ENCODE measurements at regions of chr19 and their contacts with region 1.

Region 1: GRCh38 chr19:46529622-46530462 is 34.2 kb upstream of the PNMA8B start:
- DNase-seq: peak; percentile 63

Region 2: DNA sequence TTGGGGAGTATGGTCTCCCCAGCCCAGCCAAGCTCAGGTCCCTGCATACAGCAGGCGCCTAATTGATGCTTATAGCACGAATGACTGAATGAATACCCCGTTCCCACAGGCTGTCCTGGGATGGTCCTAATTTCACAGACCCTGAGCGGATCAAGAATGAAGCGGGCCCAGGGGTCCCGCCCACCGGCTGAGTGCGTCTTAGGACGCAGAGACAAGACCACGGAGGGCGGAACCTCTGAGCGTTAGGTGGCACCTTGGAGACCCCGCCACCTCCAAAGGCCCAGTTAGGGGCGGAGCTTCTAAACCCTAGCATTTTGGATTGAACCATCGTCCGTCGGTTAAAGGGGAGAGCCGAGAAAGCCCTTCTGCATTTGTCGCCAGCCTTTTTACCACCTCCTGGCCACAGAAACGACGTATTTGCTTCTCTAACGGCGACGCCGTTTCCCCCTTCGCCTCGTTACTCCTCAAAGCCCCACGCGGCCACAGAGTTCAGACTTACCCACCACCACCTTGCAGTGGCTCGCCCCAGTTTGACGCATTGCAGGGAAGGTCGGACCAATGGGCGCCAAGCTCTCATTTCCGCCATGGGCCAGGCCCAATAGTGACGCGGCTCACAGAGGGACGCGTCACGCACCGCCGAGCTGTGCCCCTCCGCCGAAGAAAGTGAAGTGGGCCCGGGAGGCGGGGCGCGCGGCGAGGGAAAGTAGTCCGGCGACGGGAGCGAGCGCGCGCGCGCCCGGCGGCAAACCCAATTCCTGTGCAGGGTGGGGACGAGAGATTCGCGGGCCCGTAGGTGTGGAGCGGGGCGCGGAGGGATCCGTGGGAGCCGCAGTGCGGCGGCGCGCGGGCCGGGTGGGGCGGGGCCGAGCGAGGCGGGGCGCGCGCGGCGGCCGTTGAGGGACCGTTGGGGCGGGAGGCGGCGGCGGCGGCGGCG is 70.8 kb after region 1 on chr19:
- in situ Hi-C with region 1: loop called (anchors 5 kb)
- DNase-seq: peak; percentile 96